GM12878 (cell line): ENCODE measurements at regions of chr22 and their contacts with region 1.

Region 1: GRCh38 chr22:30289134-30289979 is at the start of gene CASTOR1:
- DNase-seq: no peak
- ATAC-seq: peak; percentile 83
- H3K4me3 ChIP-seq: peak within 1 kb of the TSS; percentile 74
- H3K27ac ChIP-seq: peak within 1 kb of the TSS; percentile 55
- H3K4me1 ChIP-seq: peaks cover 25% of the 10 kb centered on the region
- H3K27me3 ChIP-seq: no peaks in the 10 kb centered on the region
- CTCF ChIP-seq: no peak
- EP300 ChIP-seq: no peak
- POLR2A ChIP-seq: no peak; the same call in none of the 2 replicates
- RAD21 ChIP-seq: no peak
- polyA plus RNA-seq, gene CASTOR1: 0.31 to 1.2 TPM

Region 2: DNA sequence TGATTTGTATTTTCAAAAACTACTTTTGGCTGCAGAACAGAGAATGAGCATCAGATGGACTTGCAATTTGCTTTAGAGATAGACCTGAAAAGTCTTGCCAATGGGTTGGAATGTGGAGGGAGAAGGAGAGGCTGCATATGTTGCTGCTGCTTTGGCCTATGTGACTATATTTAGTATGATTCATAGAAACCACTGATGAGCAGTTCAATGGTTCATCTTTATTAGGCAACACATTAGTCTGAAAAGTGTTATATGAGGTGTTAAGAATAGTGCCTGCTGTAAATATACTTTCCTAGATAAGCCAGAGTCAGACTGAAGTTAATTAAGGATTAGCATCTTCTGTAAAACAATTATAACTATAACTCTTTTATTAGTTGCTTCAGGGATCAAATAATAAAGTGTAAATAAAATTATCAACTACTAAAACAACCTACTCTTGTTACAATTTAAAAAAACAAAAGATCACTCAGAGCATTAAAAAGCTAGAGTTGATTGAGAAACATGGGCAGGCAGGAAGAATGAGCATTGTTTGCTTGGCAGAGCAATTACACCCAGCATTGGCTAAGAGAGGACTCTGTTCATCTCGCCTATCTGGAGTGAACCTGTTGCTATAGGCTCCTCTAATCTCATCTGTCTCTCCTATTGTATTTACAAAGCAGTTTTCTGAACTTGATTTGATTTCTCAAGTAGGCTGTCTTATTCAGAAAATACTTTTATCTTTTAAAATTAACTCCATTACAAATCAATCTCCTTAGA is 172.8 kb before region 1 on chr22:
- CTCF ChIA-PET with region 1: interaction called, 20 read pairs
- POLR2A ChIA-PET with region 1: no interaction called
- RAD21 ChIA-PET with region 1: interaction called, 11 read pairs
- SMC1A ChIA-PET with region 1: interaction called, 3 read pairs
- in situ Hi-C with region 1: no loop called
- intact Hi-C with region 1: no loop called
- DNase-seq: no peak
- ATAC-seq: no peak
- H3K4me3 ChIP-seq: no peak overlapping the region
- H3K27ac ChIP-seq: no peak overlapping the region
- H3K4me1 ChIP-seq: no peaks in the 10 kb centered on the region
- H3K27me3 ChIP-seq: no peaks in the 10 kb centered on the region
- CTCF ChIP-seq: no peak
- EP300 ChIP-seq: no peak
- POLR2A ChIP-seq: no peak
- RAD21 ChIP-seq: no peak

Region 3: DNA sequence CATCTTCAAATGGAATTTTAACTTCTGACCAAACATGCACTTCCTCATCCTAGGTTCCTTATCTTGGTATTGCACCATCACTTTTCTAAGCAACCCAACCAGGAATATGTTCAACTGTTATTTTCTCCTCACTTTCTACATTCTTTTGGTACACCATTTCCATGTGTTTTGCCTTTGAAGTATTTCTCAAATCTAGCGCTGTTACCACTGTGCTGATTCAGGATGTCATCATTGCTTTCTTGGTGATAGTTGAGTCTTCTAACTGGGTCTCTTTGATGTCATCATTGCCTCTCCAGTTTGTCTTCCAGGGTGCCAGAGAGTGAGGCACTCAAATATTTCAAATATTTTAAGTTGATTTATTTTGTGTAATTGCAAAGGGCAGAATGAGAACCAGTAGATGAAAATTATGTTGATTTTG is 161.6 kb before region 1 on chr22:
- CTCF ChIA-PET with region 1: no interaction called
- POLR2A ChIA-PET with region 1: no interaction called
- RAD21 ChIA-PET with region 1: no interaction called
- SMC1A ChIA-PET with region 1: no interaction called
- in situ Hi-C with region 1: no loop called
- intact Hi-C with region 1: no loop called
- DNase-seq: no peak
- ATAC-seq: no peak
- H3K4me3 ChIP-seq: no peak overlapping the region
- H3K27ac ChIP-seq: no peak overlapping the region
- H3K4me1 ChIP-seq: no peaks in the 10 kb centered on the region
- H3K27me3 ChIP-seq: no peaks in the 10 kb centered on the region
- CTCF ChIP-seq: no peak
- EP300 ChIP-seq: no peak
- POLR2A ChIP-seq: no peak
- RAD21 ChIP-seq: no peak

Region 4: GRCh38 chr22:30305519-30305905 is 16.2 kb after region 1 on chr22:
- CTCF ChIA-PET with region 1: interaction called, 177 read pairs
- POLR2A ChIA-PET with region 1: interaction called, 8 read pairs
- RAD21 ChIA-PET with region 1: interaction called, 88 read pairs
- SMC1A ChIA-PET with region 1: interaction called, 84 read pairs
- in situ Hi-C with region 1: no loop called
- intact Hi-C with region 1: loop called (anchors 2 kb)
- DNase-seq: peak; percentile 59
- ATAC-seq: peak; percentile 63
- H3K4me3 ChIP-seq: peak overlapping the region; percentile 51
- H3K27ac ChIP-seq: peak overlapping the region; percentile 96
- H3K4me1 ChIP-seq: peaks cover 85% of the 10 kb centered on the region
- H3K27me3 ChIP-seq: no peaks in the 10 kb centered on the region
- CTCF ChIP-seq: no peak
- EP300 ChIP-seq: no peak
- POLR2A ChIP-seq: peak; percentile 74
- RAD21 ChIP-seq: no peak

Region 5: DNA sequence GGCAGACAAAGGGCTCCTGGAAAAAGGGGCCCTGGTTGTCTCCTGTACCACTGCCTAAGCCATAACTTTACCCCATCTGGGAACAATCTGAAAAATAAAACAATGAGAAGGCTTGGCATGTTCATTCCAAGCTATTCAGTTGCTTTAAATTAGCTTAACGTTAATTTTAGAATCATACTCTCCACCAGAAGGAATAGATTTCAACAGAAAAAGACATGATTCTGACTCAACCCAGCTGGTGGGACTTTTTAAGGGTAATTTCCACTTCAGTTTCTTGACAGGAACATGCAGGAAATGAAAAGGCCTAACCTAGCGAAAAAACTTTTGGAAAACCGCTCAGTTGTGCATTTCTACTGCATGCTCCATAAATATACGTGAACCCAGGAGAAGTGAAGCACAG is 59.5 kb after region 1 on chr22:
- CTCF ChIA-PET with region 1: interaction called, 44 read pairs
- POLR2A ChIA-PET with region 1: interaction called, 4 read pairs
- RAD21 ChIA-PET with region 1: interaction called, 22 read pairs
- SMC1A ChIA-PET with region 1: interaction called, 24 read pairs
- in situ Hi-C with region 1: no loop called
- intact Hi-C with region 1: no loop called
- DNase-seq: no peak
- ATAC-seq: peak; percentile 41
- H3K4me3 ChIP-seq: peak overlapping the region; percentile 28; the same call in 1 of the 2 replicates
- H3K27ac ChIP-seq: peak overlapping the region; percentile 77
- H3K4me1 ChIP-seq: peaks cover 13% of the 10 kb centered on the region
- H3K27me3 ChIP-seq: no peaks in the 10 kb centered on the region
- CTCF ChIP-seq: no peak
- EP300 ChIP-seq: no peak
- POLR2A ChIP-seq: no peak
- RAD21 ChIP-seq: no peak

Region 6: GRCh38 chr22:30373331-30374325 is 84.3 kb after region 1 on chr22:
- CTCF ChIA-PET with region 1: interaction called, 436 read pairs
- POLR2A ChIA-PET with region 1: no interaction called
- RAD21 ChIA-PET with region 1: interaction called, 14 read pairs
- SMC1A ChIA-PET with region 1: interaction called, 201 read pairs
- in situ Hi-C with region 1: no loop called
- intact Hi-C with region 1: no loop called
- DNase-seq: no peak
- ATAC-seq: no peak; the same call in 2 of the 3 replicates
- H3K4me3 ChIP-seq: no peak overlapping the region
- H3K27ac ChIP-seq: no peak overlapping the region
- H3K4me1 ChIP-seq: no peaks in the 10 kb centered on the region
- H3K27me3 ChIP-seq: no peaks in the 10 kb centered on the region
- CTCF ChIP-seq: no peak
- EP300 ChIP-seq: no peak
- POLR2A ChIP-seq: no peak
- RAD21 ChIP-seq: no peak

Region 7: GRCh38 chr22:30413745-30414524 is 124.6 kb after region 1 on chr22:
- CTCF ChIA-PET with region 1: interaction called, 11 read pairs
- POLR2A ChIA-PET with region 1: no interaction called
- RAD21 ChIA-PET with region 1: no interaction called
- SMC1A ChIA-PET with region 1: no interaction called
- in situ Hi-C with region 1: no loop called
- intact Hi-C with region 1: no loop called
- DNase-seq: no peak
- ATAC-seq: no peak
- H3K4me3 ChIP-seq: no peak overlapping the region
- H3K27ac ChIP-seq: no peak overlapping the region
- H3K4me1 ChIP-seq: no peaks in the 10 kb centered on the region
- H3K27me3 ChIP-seq: no peaks in the 10 kb centered on the region
- CTCF ChIP-seq: no peak
- EP300 ChIP-seq: no peak
- POLR2A ChIP-seq: no peak
- RAD21 ChIP-seq: no peak